ENCODE measurements at regions of chr1 and their contacts with region 1.

Region 1: DNA sequence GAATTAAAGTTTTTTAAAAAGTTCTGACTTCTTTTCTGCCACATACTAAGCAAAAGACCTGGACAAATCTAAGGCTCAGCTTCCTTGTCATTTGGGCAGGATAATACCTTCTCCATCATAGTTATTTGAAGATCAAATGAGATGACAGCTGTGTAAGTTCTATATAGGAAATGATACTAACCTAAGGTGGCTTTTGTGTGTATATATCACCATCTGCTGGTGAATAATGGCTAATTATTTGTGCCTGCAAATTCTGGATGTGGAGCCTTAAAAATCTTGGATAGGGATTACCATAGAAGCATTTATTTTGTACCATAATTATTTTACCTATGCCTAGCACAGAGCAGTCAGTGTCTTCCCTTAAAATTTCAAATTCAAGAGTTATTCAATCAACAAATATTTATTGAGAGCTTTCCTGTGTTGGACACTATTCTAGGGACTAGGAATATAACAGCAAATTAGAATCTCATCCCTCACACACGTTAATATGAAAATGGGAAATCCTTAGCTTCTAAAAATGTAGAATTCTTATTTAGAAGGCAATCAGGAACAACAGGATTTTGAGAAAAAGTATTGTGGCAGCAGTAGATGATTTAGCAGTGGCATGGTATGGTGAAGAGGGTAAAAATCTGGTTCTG is 89.8 kb downstream of the TMEM200B start:
- DNase-seq: peak; percentile 8
- H3K4me3 ChIP-seq: no peak overlapping the region
- H3K27ac ChIP-seq: no peak overlapping the region
- H3K27me3 ChIP-seq: no peaks in the 10 kb centered on the region
- CTCF ChIP-seq: peak; percentile 67

Region 2: DNA sequence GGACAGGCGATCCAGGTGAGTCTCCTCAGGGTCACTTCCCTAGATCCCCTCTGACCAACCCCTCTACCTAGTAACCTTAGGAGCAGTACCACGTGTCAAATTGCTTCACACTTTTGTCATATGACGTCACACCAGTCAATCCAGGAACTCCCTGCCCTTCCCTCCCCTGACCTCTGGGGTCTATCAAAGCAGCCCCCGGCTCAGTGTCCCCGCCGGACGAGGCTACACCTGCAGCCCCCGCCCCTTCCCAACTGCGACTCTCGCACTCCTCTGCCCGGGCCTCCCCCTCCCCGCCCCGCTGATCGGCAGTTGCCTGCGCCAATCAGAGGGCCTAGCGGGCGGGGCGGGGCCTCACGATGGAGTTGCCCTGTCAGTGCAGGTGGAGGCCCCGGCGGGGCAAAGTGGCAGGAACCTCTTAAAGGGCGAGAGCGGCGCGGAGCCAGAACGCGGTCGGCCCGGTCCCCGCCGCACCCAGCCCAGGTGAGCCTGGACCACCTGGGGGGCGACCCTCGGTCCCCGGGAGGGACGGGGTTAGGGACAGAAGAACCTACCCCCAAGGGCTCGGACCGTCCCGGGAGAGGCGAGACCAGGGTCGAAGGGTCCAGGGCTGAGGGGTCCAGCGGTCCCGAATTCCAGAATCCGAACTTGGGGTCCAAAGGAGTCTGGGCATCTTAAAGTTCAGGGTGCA is 147.1 kb before region 1 on chr1:
- CTCF ChIA-PET with region 1: interaction called, 712 read pairs
- POLR2A ChIA-PET with region 1: interaction called, 3 read pairs
- DNase-seq: peak; percentile 18
- H3K4me3 ChIP-seq: peak overlapping the region; percentile 62
- H3K27ac ChIP-seq: no peak overlapping the region
- H3K27me3 ChIP-seq: peaks cover 11% of the 10 kb centered on the region
- CTCF ChIP-seq: no peak

Region 3: DNA sequence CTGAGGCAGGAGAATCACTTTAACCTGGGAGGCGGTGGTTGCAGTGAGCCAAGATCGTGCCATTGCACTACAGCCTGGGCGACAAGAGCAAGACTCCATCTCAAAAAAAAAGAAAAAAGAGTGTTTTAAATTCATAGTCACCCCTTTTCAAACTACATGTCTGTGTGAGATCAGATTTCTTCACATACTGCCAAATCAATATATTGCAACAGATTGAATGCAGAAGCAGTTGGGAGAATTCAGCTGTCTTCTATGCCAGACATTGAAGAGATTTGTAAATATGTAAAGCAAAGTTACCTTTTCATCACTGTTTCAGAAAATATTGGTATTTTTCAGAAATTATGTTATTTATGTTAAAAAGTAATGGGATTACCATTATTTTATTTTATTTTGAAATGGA is 11.3 kb before region 1 on chr1:
- CTCF ChIA-PET with region 1: interaction called, 19 read pairs
- POLR2A ChIA-PET with region 1: no interaction called
- DNase-seq: no peak
- H3K4me3 ChIP-seq: no peak overlapping the region
- H3K27ac ChIP-seq: no peak overlapping the region
- H3K27me3 ChIP-seq: no peaks in the 10 kb centered on the region
- CTCF ChIP-seq: no peak

Region 4: DNA sequence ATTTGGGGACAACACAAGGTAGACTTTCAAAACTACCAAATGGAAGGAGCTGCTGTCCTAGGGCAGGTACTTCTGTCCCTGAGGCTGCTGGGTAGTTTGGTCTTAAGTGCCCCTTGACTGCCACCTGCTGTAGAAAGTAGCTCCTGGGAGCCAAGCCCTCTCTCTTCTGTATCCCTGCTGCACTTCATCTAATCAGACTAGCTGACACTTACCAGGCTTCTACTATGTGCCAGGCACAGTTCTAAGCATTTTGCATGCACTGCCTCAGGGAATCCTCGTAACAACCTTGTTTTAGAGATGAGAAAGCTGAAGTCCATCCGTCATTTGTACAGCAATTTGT is 163.6 kb after region 1 on chr1:
- CTCF ChIA-PET with region 1: interaction called, 65 read pairs
- POLR2A ChIA-PET with region 1: no interaction called
- DNase-seq: no peak
- H3K4me3 ChIP-seq: no peak overlapping the region
- H3K27ac ChIP-seq: peak overlapping the region; percentile 94
- H3K27me3 ChIP-seq: no peaks in the 10 kb centered on the region
- CTCF ChIP-seq: peak; percentile 58

Measured in AG04450 (cell line).